ENCODE measurements at regions of chr14 and their contacts with region 1.

Region 1: DNA sequence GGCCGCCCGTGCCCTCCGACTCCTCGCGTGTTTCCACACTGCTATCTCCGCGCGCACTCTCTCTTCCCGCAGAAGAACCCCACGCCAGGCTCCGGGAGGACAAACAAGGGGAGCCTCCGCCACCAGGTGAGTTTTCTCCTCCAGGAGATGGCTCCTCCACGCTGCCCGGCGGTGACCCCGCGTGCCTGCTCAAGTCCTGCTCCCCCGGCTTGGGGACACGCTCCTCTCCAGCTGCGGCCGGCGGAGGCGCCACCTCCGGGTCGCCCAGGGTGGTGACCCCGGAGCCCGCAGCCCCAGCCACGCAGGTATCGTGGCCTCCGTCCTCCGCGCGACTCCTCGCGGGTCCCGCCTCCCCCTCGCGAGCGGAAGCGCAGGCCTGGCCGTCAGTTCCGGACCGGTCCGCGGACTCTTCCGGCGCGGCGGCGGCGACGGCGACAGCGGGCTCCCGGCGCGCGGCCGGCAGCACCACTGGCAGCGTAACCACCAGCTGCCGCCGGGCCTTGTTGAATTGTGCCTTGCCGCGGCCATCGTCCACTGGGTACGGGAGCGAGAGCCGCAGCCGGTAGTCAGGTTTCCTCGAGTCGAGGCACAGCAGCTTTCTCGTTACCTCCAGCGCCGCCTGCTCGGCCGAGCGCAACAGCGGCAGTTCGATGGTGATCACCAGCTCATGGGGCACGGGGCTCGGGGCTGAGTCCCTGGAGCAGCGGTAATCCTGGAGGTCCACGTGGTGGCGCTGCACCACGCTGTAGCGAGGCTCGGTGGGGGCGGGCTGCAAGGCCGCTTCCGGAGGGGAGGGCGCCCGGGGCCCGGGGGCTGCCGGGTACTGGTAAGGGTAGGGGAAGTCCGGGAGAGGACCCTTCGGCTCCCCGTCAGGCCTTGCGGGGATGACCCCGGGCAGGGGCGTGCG is 1.2 kb downstream of the DNAAF2 start:
- DNase-seq: peak; percentile 86 to 98
- ATAC-seq: peak; percentile 89 to 90
- H3K4me3 ChIP-seq: peak overlapping the region; percentile 78
- H3K27ac ChIP-seq: peak overlapping the region; percentile 92 to 94
- H3K4me1 ChIP-seq: peaks cover 22% of the 10 kb centered on the region; the same call in 2 of the 3 replicates
- CTCF ChIP-seq: peak; percentile 84
- EP300 ChIP-seq: no peak
- POLR2A ChIP-seq: peak; percentile 89
- RAD21 ChIP-seq: peak; percentile 74 to 81

Region 2: DNA sequence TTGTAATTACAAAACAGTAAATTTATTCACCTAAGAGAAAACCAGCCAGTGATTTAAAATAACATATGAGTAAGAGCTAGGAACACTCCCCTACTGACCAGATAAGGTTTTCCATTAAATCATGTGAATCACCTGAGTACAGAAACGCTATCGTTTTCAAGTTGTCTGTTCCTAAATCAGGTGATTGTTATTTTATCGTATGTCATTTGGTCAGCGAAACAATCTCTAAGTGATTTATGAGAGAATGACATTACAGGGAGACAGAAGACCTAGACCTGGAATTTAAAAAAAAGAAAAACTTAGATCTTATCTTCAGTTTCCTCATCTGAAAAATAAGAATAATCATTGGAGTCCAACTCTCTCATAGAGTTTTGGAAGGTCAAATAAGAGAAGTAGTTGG is 95.0 kb before region 1 on chr14:
- CTCF ChIA-PET with region 1: no interaction called
- POLR2A ChIA-PET with region 1: no interaction called
- DNase-seq: no peak
- ATAC-seq: no peak
- H3K4me3 ChIP-seq: no peak overlapping the region
- H3K27ac ChIP-seq: no peak overlapping the region
- H3K4me1 ChIP-seq: no peaks in the 10 kb centered on the region
- CTCF ChIP-seq: no peak
- EP300 ChIP-seq: no peak
- POLR2A ChIP-seq: no peak
- RAD21 ChIP-seq: no peak

Region 3: GRCh38 chr14:49620182-49621113 is 13.4 kb before region 1 on chr14 and contains the starts of genes MGAT2 and RPL36AL:
- CTCF ChIA-PET with region 1: interaction called, 55 read pairs
- POLR2A ChIA-PET with region 1: interaction called, 46 read pairs
- DNase-seq: peak; percentile 98 to 99
- ATAC-seq: peak; percentile 94 to 98
- H3K4me3 ChIP-seq: peak within 1 kb of the TSS; percentile 78
- H3K27ac ChIP-seq: peak within 1 kb of the TSS; percentile 95 to 96
- H3K4me1 ChIP-seq: peaks cover 55% of the 10 kb centered on the region
- CTCF ChIP-seq: 0 out of 3 replicates have a peak, but pooled peaks have one; percentile 10
- EP300 ChIP-seq: no peak
- POLR2A ChIP-seq: peak; percentile 94
- RAD21 ChIP-seq: no peak
- polyA plus RNA-seq, gene MGAT2: 33.0 and 35.6 TPM in 2 replicates
- polyA plus RNA-seq, gene RPL36AL: 280 and 390 TPM in 2 replicates

Region 4: DNA sequence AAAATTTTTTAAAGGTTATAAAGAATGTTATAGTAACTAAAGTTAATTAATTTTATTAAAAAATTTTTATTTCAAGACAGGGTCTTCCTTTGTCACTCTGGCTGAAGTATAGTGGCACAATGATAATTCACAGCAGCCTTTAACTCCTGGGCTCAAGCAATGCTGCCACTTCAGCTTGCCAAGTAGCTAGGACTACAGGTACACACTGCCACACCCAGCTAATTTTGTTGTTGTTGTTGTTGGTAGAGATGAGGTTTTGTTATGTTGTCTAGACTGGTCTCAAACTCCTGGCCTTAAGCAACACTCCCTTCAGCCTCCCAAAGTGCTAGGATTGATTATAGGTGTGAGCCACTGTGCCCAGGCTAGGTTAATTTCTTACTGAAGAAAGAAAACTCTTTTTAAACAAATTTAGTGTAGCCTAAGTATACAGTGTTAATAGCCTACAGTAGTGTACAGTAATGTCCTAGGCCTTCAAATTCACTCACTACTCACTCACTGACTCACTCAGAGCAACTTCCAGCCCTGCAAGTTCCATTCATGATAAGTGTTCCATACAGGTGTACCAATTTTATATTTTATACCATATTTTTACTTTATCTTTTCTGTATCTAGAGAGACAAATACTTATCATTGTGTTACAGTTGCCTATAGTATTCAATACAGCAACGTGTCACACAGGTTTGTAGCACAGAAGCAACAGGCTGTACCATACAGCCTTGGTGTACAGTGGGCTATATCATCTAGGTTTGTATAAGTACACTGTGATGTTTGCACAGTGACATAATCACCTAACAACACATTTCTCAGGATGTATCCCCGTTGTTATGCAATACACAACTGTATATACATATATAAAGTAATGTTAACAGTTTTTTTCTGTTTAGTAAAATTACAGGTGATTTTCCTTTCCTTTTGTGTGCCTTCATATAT is 25.9 kb after region 1 on chr14:
- CTCF ChIA-PET with region 1: interaction called, 16 read pairs
- POLR2A ChIA-PET with region 1: no interaction called
- DNase-seq: peak in 1 of 2 experiments; percentile 29
- ATAC-seq: peak; percentile 43 to 76; a peak in 4 of 6 replicates
- H3K4me3 ChIP-seq: no peak overlapping the region
- H3K27ac ChIP-seq: no peak overlapping the region; a peak in 1 of 6 replicates
- H3K4me1 ChIP-seq: peaks cover 21% of the 10 kb centered on the region
- CTCF ChIP-seq: no peak
- EP300 ChIP-seq: no peak
- POLR2A ChIP-seq: no peak
- RAD21 ChIP-seq: no peak

Region 5: DNA sequence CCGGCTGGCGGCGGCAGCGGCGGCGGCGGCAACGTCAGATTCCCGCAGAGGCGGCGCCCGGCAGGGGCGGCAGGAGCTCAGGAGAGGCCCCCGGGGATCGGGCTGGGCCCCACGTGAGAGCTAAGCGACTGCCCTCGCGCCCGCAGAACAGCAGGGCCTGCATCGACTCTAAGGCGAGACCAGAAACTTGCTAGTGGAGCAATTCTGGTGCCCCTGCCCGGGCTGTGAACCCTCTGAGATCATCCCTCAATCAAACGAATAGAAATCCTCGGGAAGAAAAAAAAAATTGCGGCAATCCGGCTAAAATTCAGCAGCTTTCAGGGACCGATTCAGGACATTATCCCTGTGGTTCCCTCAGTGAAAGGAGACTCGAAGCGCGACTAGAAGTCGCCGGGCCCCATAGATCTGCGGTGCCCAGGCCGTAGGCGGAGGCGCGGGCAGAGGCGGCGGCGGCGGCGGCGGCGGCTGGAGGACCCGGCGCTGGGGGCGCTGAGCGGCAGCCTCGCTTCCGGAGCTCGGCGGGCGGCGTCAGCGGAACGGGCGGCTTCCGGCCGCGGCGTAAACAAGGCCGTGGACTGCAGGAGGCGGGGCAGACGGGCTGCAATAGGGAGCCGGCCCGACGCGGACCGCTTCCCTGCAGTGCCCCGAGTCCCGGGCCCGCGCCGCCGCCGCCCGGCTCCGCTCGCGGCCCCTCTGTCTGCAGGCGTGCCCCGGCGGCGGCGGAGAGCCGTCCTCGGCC is 133.8 kb after region 1 on chr14 and contains the start of gene KLHDC2:
- CTCF ChIA-PET with region 1: interaction called, 38 read pairs
- POLR2A ChIA-PET with region 1: interaction called, 43 read pairs
- DNase-seq: peak; percentile 65 to 91
- ATAC-seq: peak; percentile 85 to 87
- H3K4me3 ChIP-seq: peak within 1 kb of the TSS; percentile 93
- H3K27ac ChIP-seq: peak within 1 kb of the TSS; percentile 94 to 96
- H3K4me1 ChIP-seq: peaks cover 33% of the 10 kb centered on the region
- CTCF ChIP-seq: peak; percentile 62
- EP300 ChIP-seq: no peak
- POLR2A ChIP-seq: peak; percentile 80
- RAD21 ChIP-seq: no peak; a peak in 1 of 5 replicates
- polyA plus RNA-seq, gene KLHDC2: 75.7 and 83.7 TPM in 2 replicates